ENCODE measurements at regions of chr4 and their contacts with region 1.

Region 1: GRCh38 chr4:99088481-99089365 is at the start of gene ADH5:
- DNase-seq: peak; percentile 75 to 90 (median 85)
- ATAC-seq: peak; percentile 98
- H3K4me3 ChIP-seq: peak within 1 kb of the TSS; percentile 98
- H3K4me3 Mint-ChIP-seq: peak within 1 kb of the TSS; percentile 93 to 99 (median 98)
- H3K27ac ChIP-seq: peak within 1 kb of the TSS; percentile 85
- H3K27ac Mint-ChIP-seq: peak within 1 kb of the TSS; percentile 94 to 99 (median 98)
- H3K4me1 ChIP-seq: peaks cover 8 to 9% of the 10 kb centered on the region in 2 donors
- H3K4me1 Mint-ChIP-seq: peaks cover 28 to 67% (median 57%) of the 10 kb centered on the region in 7 donors
- H3K27me3 ChIP-seq: no peaks in the 10 kb centered on the region
- H3K27me3 Mint-ChIP-seq: peaks cover 0 to 11% (median 0%) of the 10 kb centered on the region in 5 donors
- total RNA-seq, gene ADH5: 42.7 to 102 (median 74.0) TPM

Region 2: DNA sequence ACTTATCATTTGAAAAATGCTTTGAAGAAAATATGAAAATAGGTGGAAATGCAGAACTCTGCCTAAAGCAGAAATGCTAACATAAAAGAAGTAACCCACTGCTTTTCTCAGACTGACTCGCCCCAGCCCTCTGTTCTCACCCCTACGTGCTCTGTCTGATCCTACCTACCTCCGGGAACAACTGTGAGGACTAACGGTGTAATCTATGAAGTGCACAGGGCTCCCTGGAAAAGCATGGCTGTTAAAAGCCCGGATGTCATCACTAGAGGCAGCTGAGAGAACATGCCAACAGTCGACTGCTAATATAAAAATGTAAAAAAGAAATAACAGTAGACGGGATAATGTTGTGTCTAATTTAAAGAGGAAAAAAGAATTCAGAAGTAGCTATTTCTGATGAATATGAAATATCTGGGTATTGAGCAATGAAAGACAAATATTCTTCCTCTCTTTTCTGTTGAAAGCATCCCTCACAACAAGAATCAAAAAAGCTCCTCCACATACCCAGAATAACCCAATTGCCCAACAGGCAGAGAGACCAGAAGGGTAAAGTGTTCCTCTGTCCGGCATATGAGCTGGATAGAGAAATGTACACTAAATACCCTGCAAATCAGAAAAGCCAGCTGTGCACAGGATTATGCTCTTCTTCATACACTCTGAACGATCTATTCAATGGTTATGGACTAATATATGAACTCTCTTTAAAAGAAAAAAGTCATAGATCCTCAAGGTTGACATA is 561.0 kb before region 1 on chr4:
- CTCF ChIA-PET with region 1: no interaction called
- POLR2A ChIA-PET with region 1: no interaction called
- intact Hi-C with region 1: no loop called
- DNase-seq: no peak
- ATAC-seq: no peak
- H3K4me3 ChIP-seq: no peak overlapping the region
- H3K4me3 Mint-ChIP-seq: no peak overlapping the region
- H3K27ac ChIP-seq: no peak overlapping the region
- H3K27ac Mint-ChIP-seq: peak overlapping the region in 2 of 9 donors; percentile 16 to 50
- H3K4me1 ChIP-seq: no peaks in the 10 kb centered on the region
- H3K4me1 Mint-ChIP-seq: peaks cover 5 to 44% (median 11%) of the 10 kb centered on the region in 7 donors
- H3K27me3 ChIP-seq: no peaks in the 10 kb centered on the region
- H3K27me3 Mint-ChIP-seq: no peaks in the 10 kb centered on the region

Region 3: DNA sequence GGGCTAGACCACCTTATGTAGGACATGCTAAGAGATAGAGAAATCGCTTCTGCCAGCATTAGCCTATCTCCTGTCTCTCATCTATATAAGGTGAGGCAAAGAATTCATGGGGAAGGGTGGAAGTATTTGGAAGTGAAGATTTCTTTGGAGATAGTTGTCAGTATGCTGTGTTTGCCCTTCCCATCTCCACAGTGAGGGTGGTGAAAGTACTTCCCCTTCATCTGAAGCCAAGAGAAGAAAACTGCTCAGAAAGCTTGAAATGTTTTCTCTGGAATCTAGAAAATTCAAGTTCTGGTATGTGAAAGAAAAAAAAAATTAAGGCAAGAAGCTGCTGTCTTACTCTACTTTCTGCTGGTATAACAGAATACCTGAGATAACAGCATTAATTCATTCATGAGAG is 12.2 kb after region 1 on chr4:
- CTCF ChIA-PET with region 1: no interaction called
- POLR2A ChIA-PET with region 1: interaction called, 10 read pairs
- intact Hi-C with region 1: no loop called
- DNase-seq: no peak
- ATAC-seq: no peak
- H3K4me3 ChIP-seq: no peak overlapping the region
- H3K4me3 Mint-ChIP-seq: no peak overlapping the region
- H3K27ac ChIP-seq: no peak overlapping the region
- H3K27ac Mint-ChIP-seq: no peak overlapping the region
- H3K4me1 ChIP-seq: no peaks in the 10 kb centered on the region
- H3K4me1 Mint-ChIP-seq: peaks cover 0 to 8% (median 0%) of the 10 kb centered on the region in 7 donors
- H3K27me3 ChIP-seq: no peaks in the 10 kb centered on the region
- H3K27me3 Mint-ChIP-seq: peaks cover 0 to 10% (median 0%) of the 10 kb centered on the region in 5 donors

Region 4: DNA sequence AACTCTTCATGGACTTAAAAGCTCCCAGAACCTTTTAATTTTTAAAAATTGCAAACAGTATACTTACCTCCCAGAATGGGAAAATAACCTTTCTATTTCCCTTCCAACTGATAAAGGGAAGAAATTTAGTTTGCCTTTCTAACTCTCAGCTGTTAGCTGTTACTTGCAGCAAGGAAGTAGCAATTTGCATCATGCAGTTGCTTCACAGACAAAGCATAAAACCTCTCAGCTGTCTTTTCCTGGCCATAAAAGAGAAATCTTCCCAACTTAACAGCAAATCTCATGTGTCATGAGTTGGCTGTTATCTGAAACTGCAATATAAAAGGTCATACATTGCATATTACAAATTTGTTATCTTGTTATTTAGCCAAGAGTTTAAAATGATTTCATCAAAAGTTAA is 440.5 kb after region 1 on chr4:
- CTCF ChIA-PET with region 1: no interaction called
- POLR2A ChIA-PET with region 1: no interaction called
- intact Hi-C with region 1: no loop called
- DNase-seq: no peak
- ATAC-seq: no peak
- H3K4me3 ChIP-seq: no peak overlapping the region
- H3K4me3 Mint-ChIP-seq: no peak overlapping the region
- H3K27ac ChIP-seq: no peak overlapping the region
- H3K27ac Mint-ChIP-seq: no peak overlapping the region
- H3K4me1 ChIP-seq: no peaks in the 10 kb centered on the region
- H3K4me1 Mint-ChIP-seq: no peaks in the 10 kb centered on the region
- H3K27me3 ChIP-seq: peaks cover 0 to 4% of the 10 kb centered on the region in 2 donors
- H3K27me3 Mint-ChIP-seq: peaks cover 0 to 15% (median 0%) of the 10 kb centered on the region in 5 donors

Region 5: DNA sequence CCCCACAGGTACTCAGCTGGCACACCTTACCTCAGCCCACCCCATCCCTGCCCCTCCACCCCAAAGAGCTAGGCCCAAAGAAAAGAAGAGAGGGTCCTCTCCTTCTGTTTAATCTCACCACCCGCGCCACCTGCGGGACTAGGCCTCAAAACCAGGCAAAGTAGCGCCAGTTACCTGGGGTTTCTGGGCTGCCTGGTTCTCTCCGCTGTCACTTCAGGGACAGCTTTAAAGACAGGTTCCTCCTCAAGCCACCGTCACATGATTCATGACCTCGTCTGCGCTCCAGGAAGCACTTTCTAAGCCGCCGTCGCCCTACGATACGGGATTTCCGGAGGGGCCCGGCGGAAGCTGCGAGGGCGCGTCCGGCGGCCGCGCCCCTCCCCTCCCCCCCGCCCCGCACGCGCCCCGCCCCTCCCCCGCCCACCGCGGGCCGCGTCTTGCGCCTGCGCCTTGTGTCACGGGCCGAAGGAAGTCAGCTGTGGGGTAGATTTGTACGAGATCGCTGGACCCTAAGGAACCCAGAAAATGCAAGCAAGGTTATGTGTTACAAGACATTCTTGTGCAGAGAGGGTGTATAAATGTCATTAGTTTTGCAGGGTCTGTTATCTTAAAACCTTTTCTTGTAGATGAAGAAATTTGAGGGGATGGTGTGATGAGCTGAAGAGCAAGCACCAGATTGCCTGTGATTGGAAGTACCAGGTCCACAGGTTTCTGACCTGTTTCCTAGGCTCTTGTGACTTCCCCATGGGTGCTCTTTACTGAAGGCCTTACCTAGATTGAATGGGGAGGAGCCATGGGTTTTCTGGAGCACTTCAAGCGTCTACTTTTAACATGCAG is 805.7 kb after region 1 on chr4 and contains the start of gene LAMTOR3:
- CTCF ChIA-PET with region 1: no interaction called
- POLR2A ChIA-PET with region 1: interaction called, 3 read pairs
- intact Hi-C with region 1: loop called (anchors 1 to 2 kb)
- DNase-seq: peak; percentile 70 to 92 (median 89)
- ATAC-seq: peak; percentile 98
- H3K4me3 ChIP-seq: peak within 1 kb of the TSS; percentile 92
- H3K4me3 Mint-ChIP-seq: peak within 1 kb of the TSS; percentile 96 to 99 (median 98)
- H3K27ac ChIP-seq: peak within 1 kb of the TSS; percentile 96
- H3K27ac Mint-ChIP-seq: peak within 1 kb of the TSS; percentile 96 to 99 (median 98)
- H3K4me1 ChIP-seq: peaks cover 13 to 25% of the 10 kb centered on the region in 2 donors
- H3K4me1 Mint-ChIP-seq: peaks cover 25 to 55% (median 52%) of the 10 kb centered on the region in 7 donors
- H3K27me3 ChIP-seq: no peaks in the 10 kb centered on the region
- H3K27me3 Mint-ChIP-seq: no peaks in the 10 kb centered on the region
- total RNA-seq, gene LAMTOR3: 20.1 to 32.6 (median 27.4) TPM